ENCODE measurements at regions of chr9 and their contacts with region 1.

Region 1: DNA sequence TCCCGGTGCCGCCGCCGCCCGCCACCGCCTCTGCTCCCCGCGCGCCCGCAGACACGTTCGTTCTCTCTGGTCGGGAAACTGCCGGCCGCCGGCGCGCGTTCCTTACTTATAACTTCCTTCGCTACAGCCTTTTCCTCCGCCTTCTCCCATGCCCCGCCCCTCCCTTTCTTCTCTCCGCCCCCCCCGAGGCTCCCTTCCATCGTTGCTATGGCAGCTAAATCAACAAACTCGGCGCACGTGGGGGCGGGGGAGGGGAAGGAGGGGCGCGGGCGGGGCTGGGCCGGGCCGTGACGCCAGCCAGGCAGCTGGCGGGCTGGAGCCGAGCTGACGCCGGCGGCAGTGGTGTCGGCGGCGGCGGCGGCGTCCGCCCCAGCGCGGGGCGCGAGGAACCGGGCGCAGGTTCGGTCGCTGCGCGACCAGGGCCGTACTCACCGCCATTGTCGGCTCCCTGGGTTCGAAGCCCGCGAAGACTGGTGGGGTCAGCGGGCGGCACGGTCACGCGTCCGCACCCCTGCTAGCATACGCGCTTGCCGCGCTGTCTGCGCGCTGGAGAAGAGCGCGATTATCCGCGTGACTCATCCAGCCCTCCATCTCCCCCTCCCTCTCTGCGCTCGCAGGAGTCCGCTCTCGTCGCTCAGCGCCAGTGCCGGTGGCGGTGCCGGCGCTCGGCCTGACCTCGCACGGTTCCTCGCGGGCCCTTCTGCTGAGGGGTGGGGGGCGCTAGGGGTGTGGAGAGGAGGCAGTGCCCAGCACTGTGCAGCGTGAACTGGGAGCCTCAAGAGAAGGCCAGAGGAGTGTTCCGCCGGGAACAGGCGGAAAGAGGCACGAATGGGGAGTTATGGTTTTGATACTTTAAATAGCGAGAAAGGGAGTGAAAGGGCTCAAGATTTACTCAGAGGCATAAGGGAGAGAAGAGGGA is at the start of gene KLF4:
- DNase-seq: peak; percentile 83 to 89 (median 89)
- ATAC-seq: peak; percentile 66 to 82 (median 81)
- H3K4me3 ChIP-seq: peak within 1 kb of the TSS; percentile 53 to 58 (median 55)
- H3K27ac ChIP-seq: peak within 1 kb of the TSS; percentile 60 to 78 (median 66)
- H3K4me1 ChIP-seq: peaks cover 0 to 27% (median 3%) of the 10 kb centered on the region in 4 donors
- H3K27me3 ChIP-seq: peaks cover 0 to 4% of the 10 kb centered on the region in 2 donors
- CTCF ChIP-seq: no peak
- POLR2A ChIP-seq: peak; percentile 89
- total RNA-seq, gene KLF4: 1.5 to 12.4 (median 5.9) TPM

Region 2: DNA sequence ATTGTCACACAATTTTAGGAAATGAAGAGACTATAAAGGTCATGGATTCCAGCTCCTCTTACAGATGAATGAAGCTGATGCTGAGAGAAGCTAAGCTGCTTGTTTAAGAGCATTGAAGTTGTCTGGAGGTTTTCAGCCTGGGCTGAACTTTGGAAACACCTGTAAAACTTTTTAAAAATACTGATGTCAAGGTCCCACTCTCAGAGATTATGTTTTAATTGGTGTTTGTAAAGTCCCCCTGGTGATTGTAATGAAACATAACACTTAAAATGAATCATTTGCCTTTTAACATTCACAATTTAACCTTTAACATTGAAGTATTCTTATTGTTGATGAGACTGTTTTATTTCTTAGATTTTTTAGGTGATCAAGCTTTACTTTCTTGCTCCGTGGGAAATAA is 190.5 kb before region 1 on chr9:
- intact Hi-C with region 1: no loop called
- DNase-seq: no peak
- ATAC-seq: no peak
- H3K4me3 ChIP-seq: no peak overlapping the region
- H3K27ac ChIP-seq: no peak overlapping the region
- H3K4me1 ChIP-seq: peaks cover 0 to 54% (median 20%) of the 10 kb centered on the region in 4 donors
- H3K27me3 ChIP-seq: no peaks in the 10 kb centered on the region
- CTCF ChIP-seq: no peak
- POLR2A ChIP-seq: no peak

Region 3: DNA sequence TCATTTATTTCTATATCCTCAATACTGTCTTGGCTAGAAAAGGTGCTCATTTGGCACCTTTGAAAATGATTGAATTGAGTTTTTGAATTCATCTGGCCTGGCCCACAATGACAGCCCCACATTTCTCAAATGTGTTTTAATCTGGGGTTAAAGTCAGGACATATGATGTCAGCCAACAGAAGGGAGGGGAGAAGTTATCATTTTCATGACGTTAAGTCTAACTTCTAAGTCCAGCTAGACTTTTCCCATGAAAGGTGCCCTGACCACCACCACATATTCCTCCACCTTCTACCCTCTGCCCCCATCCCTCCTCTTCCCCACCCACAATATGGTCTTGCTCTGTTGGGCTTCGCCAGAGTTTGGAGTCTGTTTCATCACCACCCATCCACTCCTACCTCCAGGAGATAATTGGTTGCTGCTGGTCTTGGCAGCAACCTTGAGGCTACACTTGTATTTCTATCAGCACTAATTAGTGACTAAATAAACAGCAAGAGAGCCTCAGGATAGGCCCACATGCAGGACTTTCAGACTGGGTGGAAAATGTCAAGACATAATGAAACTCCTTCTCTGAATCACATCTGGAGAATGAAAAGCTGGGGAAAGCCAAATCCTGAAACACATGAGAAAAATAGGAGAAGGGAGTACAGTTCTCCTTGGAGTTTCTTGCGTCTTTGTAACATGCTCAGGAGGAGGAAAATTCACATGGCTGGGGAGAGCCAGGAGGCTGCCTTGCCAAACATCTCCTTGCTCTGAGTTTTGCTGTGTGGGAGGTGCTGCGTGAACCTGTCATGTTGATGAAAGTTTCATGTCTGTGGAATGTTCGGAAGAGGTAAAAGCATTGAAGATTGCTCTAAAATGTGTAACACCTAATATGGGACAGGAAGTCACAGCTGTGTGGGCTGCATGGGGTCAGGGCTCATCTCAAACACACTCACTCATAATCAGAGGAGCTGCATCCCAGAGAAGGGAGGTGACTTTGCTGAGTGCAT is 544.3 kb after region 1 on chr9:
- intact Hi-C with region 1: no loop called
- DNase-seq: no peak
- ATAC-seq: no peak
- H3K4me3 ChIP-seq: no peak overlapping the region
- H3K27ac ChIP-seq: no peak overlapping the region
- H3K4me1 ChIP-seq: no peaks in the 10 kb centered on the region
- H3K27me3 ChIP-seq: no peaks in the 10 kb centered on the region
- CTCF ChIP-seq: no peak
- POLR2A ChIP-seq: no peak

Region 4: DNA sequence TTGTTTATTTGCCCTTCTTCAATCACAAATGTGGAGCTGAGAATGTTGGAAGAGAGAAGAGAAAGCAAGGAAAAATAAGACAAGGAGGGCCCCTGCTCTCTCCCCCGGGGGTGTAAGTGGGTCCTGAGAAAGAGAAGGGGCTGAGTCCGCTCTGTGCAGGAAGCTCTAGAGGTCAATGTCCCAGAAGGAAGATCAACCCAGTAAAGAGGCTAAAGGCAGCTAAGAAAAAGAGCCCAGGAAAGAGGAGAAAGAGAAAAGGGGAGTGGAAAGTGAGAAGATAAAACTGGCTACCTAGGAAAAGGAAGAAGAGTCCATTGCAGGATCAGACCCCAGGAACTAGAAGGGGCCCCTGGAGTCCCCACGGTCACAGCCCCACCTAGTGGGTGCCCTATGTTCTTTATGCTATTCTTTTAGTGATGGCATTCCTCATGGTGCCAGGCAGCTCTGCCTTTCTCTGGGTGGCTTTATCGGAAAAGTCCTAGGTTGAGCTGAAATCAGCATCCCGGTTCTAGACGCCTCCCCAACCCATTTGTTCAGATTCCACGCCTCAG is 782.5 kb after region 1 on chr9:
- intact Hi-C with region 1: loop called (anchors 10 kb)
- DNase-seq: peak; percentile 63 to 69 (median 65)
- ATAC-seq: peak; percentile 95 to 97 (median 96)
- H3K4me3 ChIP-seq: peak overlapping the region; percentile 30 to 48 (median 45)
- H3K27ac ChIP-seq: peak overlapping the region; percentile 14 to 68 (median 50)
- H3K4me1 ChIP-seq: peaks cover 0 to 5% (median 3%) of the 10 kb centered on the region in 4 donors
- H3K27me3 ChIP-seq: no peaks in the 10 kb centered on the region
- CTCF ChIP-seq: peak; percentile 68 to 78 (median 73)
- POLR2A ChIP-seq: no peak

Measured in right lobe of liver (tissue), 6 donors.